ENCODE measurements at regions of chr4 and their contacts with region 1.

Region 1: DNA sequence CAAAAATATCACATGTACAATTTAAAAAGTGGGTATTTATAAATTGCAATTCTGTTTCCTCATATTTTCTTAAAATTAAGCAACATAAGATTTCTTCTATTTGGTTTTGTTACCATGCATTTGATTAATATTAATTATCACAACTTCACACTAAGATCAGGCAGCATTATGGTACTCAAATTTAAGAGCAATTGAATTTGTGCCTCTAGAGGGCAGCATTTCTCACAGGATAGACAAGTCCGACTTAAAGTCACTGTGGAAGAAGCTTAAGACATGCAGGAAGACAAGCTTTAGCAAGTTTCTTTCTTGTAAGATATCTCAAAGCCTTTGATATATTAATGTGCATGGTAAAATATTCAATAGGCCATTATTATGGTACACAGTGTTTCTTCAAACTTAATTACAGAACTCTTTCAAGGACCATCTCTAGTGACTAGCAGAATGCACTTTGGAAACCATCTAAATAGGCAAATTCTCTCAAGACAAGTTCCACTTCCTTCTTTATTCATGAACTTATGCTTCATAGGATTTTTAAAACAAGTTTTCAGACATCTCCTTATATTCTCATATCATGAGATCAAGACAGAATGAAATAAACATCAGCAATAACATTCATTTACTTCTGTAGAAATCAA is 35.0 kb downstream of the FBXW7 start:
- DNase-seq: peak in 1 of 3 donors; percentile 95
- ATAC-seq: peak; percentile 83
- H3K4me3 ChIP-seq: no peak overlapping the region
- H3K4me1 ChIP-seq: no peaks in the 10 kb centered on the region
- CTCF ChIP-seq: peak; percentile 69

Region 2: GRCh38 chr4:151614561-151614960 is 886.4 kb before region 1 on chr4:
- intact Hi-C with region 1: no loop called
- DNase-seq: no peak
- ATAC-seq: no peak
- H3K4me3 ChIP-seq: no peak overlapping the region
- H3K4me1 ChIP-seq: no peaks in the 10 kb centered on the region
- CTCF ChIP-seq: no peak

Region 3: DNA sequence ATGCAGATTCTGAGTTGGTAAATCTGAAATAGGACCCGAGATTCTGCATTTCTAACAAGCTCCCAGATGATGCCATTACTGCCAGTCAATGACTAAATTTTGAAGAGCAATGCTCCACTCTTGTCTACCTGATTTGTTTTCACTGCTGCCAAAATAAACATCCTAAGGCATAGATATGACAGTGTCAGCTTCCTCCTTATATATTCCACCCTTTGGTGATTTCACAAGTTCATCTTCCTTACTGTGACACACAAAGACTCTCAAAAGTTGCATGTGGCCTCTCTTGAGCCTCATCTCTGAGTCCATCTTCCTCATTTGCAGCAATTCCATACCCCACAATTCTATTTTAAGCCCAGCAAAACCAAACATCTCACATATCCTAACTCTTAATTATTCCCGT is 75.9 kb before region 1 on chr4:
- intact Hi-C with region 1: no loop called
- DNase-seq: no peak
- ATAC-seq: no peak
- H3K4me3 ChIP-seq: no peak overlapping the region
- H3K4me1 ChIP-seq: no peaks in the 10 kb centered on the region
- CTCF ChIP-seq: no peak

Region 4: GRCh38 chr4:152640058-152640833 is 139.3 kb after region 1 on chr4:
- intact Hi-C with region 1: loop called (anchors 2 to 5 kb)
- DNase-seq: no peak
- ATAC-seq: peak; percentile 58
- H3K4me3 ChIP-seq: no peak overlapping the region
- H3K4me1 ChIP-seq: peaks cover 13% of the 10 kb centered on the region
- CTCF ChIP-seq: no peak

Region 5: DNA sequence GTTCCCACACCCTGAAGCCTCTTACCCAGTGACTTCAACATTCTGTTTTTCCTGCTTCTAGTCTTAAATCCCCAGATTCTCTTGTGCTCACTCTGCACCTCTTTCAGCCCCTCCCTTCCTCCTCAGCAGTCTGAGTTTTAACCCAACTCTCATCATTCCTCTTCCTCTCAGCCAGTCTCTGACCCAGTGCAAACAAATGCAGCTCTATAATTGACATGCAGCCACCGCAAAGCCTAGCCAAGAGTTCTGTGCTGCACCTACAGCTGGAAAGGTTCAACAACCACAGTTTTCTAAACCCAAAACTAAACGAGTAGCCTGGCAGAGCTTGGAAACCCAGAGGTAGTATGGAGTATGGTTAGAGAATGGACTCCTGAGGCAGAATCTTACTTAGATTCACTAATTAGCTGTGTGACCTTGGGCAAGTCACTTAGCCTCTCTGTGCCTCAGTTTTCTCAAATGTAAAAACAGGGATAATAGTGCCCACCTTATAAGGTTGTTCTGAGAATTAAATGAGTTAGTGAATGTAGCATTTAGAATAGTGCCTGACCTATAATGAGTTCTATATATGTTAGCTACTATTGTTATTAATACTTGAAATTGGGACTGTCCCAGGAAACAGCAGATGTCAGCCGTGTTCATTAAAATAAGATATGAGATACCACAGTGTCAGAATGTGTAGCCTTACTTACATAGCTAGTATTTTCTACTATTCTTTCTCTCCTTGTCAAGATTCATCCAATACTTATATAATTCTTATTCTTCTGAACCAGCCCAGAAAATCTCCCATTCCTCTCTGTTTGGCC is 175.3 kb after region 1 on chr4:
- intact Hi-C with region 1: no loop called
- DNase-seq: no peak
- ATAC-seq: no peak
- H3K4me3 ChIP-seq: no peak overlapping the region
- H3K4me1 ChIP-seq: peaks cover 11% of the 10 kb centered on the region
- CTCF ChIP-seq: no peak

Region 6: DNA sequence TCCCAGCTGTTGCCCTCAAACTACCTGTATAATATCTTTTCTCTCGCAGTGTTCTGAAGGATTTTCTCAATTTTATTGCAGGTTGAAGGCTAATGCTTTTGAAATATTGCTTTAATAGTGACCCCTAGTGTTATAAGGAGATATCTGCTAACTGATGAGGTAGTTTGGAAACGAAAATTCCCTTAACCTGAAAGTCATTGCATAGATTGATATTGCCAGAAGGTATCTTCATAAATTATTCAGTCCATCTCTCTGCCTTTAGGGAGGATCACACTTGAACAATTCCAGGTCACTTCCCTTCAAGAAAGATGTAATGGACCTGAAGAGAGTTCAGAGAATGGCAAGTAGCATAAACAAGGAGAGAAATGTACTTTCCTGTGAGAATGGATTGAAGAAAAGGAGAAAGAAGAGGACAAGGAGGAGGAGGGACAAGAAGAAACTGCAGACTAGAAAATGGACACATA is 234.5 kb after region 1 on chr4:
- intact Hi-C with region 1: loop called in 1 of 2 experiments (anchors 10 kb)
- DNase-seq: no peak
- ATAC-seq: peak; percentile 62
- H3K4me3 ChIP-seq: no peak overlapping the region
- H3K4me1 ChIP-seq: no peaks in the 10 kb centered on the region
- CTCF ChIP-seq: no peak

Region 7: DNA sequence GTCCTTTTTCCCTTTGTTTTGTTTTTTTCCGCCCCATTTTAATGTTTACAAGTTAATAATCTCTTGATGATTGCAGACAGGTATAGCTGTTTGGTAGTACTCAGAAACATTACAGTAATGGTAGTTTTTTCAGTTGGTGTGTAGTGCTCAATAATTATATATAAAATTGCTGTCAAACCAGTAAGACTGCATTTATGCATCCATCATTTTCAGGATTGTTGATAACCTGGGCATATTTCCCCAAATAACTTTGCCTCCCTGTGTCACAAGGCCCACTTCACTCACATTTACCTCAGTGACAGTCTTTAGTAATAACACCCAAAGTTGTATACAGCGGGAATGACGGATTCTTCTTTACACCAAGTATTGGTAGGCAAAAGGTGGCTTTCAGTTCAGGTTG is 295.0 kb after region 1 on chr4:
- intact Hi-C with region 1: no loop called
- DNase-seq: no peak
- ATAC-seq: no peak
- H3K4me3 ChIP-seq: no peak overlapping the region
- H3K4me1 ChIP-seq: peaks cover 4% of the 10 kb centered on the region
- CTCF ChIP-seq: no peak